AG04450 (cell line): ENCODE measurements at regions of chr18 and their contacts with region 1.

Region 1: GRCh38 chr18:73688847-73689711 is 458.6 kb downstream of the FBXO15 start:
- DNase-seq: peak; percentile 86
- H3K4me3 ChIP-seq: peak overlapping the region; percentile 52
- H3K27ac ChIP-seq: peak overlapping the region; percentile 96
- H3K27me3 ChIP-seq: no peaks in the 10 kb centered on the region
- CTCF ChIP-seq: no peak

Region 2: DNA sequence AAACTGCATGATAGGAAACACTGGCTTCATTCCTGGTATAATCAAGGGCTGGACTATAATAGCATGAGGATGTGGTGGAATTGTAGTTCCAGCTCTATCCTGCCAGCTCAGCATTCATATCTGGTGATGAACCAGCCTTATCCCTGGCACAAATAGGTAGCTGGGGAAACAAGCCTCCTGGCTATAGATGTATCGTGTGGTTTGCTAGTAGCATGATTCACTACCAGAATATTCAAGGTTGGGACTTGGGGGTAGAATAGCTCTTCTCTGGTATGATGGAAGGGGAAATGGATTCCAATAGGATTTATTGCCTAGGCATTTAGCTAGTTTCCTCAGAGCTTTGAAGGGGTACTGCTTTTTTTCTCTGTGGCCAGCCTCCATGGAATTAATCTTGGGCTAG is 74.3 kb before region 1 on chr18:
- CTCF ChIA-PET with region 1: no interaction called
- POLR2A ChIA-PET with region 1: interaction called, 10 read pairs
- DNase-seq: peak; percentile 63
- H3K4me3 ChIP-seq: no peak overlapping the region
- H3K27ac ChIP-seq: peak overlapping the region; percentile 43
- H3K27me3 ChIP-seq: no peaks in the 10 kb centered on the region
- CTCF ChIP-seq: no peak

Region 3: GRCh38 chr18:73669299-73669698 is 19.8 kb before region 1 on chr18:
- CTCF ChIA-PET with region 1: no interaction called
- POLR2A ChIA-PET with region 1: no interaction called
- DNase-seq: peak; percentile 63
- H3K4me3 ChIP-seq: no peak overlapping the region
- H3K27ac ChIP-seq: no peak overlapping the region
- H3K27me3 ChIP-seq: no peaks in the 10 kb centered on the region
- CTCF ChIP-seq: no peak